Left ventricle myocardium inferior (tissue), 1 donor: ENCODE measurements at regions of chr19 and their contacts with region 1.

Region 1: GRCh38 chr19:10269333-10270179 is 1.4 kb upstream of the ICAM1 start:
- DNase-seq: peak; percentile 90
- H3K4me3 ChIP-seq: peak overlapping the region; percentile 71
- H3K27ac ChIP-seq: peak overlapping the region; percentile 93
- H3K4me1 ChIP-seq: peaks cover 50% of the 10 kb centered on the region
- H3K27me3 ChIP-seq: peaks cover 21% of the 10 kb centered on the region
- CTCF ChIP-seq: peak; percentile 98

Region 2: GRCh38 chr19:10173257-10173926 is 96.2 kb before region 1 on chr19:
- intact Hi-C with region 1: no loop called
- DNase-seq: no peak
- H3K4me3 ChIP-seq: no peak overlapping the region
- H3K27ac ChIP-seq: no peak overlapping the region
- H3K4me1 ChIP-seq: no peaks in the 10 kb centered on the region
- H3K27me3 ChIP-seq: no peaks in the 10 kb centered on the region
- CTCF ChIP-seq: no peak

Region 3: DNA sequence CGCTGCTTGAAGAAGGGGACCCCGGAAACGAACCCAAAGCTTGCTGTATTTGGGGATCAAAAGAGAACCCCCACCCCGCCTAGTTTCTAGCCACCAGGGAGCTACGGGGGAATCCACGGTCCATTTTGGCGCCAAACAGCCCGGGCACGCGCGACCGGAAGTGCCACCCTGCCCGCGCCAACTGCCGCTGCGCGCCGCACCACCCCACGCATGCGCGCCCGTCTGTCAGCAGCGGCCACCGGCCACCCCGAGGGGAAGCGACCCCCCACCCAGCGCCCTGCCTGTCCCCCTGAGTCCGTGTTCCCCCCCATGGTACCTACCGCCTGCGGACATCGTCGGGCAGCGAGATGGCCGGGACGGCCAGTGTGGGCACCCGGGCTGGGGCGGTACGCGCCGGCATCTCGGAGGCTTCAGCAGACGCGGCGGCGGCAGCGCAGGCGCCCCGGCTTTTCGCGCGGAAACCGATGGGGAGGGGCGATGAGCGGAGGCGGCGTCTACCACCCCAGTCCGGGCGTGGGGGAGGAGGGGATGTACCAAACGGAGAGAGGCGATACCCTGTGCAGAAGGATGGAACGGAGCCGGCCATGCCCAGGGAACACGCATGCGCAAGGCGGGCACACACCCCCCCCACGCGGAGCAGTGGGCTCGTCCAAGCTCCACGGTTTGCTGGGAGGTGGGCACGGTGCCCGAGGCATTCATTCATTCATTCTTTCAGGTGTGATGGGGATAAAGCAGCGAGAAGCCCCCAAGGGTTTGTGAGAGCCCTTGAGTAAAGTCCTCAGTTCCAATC is 74.9 kb before region 1 on chr19 and contains the start of gene DNMT1:
- intact Hi-C with region 1: no loop called
- DNase-seq: peak; percentile 95
- H3K4me3 ChIP-seq: peak within 1 kb of the TSS; percentile 94
- H3K27ac ChIP-seq: peak within 1 kb of the TSS; percentile 91
- H3K4me1 ChIP-seq: peaks cover 39% of the 10 kb centered on the region
- H3K27me3 ChIP-seq: no peaks in the 10 kb centered on the region
- CTCF ChIP-seq: no peak
- total RNA-seq, gene DNMT1: 23.9 TPM

Region 4: DNA sequence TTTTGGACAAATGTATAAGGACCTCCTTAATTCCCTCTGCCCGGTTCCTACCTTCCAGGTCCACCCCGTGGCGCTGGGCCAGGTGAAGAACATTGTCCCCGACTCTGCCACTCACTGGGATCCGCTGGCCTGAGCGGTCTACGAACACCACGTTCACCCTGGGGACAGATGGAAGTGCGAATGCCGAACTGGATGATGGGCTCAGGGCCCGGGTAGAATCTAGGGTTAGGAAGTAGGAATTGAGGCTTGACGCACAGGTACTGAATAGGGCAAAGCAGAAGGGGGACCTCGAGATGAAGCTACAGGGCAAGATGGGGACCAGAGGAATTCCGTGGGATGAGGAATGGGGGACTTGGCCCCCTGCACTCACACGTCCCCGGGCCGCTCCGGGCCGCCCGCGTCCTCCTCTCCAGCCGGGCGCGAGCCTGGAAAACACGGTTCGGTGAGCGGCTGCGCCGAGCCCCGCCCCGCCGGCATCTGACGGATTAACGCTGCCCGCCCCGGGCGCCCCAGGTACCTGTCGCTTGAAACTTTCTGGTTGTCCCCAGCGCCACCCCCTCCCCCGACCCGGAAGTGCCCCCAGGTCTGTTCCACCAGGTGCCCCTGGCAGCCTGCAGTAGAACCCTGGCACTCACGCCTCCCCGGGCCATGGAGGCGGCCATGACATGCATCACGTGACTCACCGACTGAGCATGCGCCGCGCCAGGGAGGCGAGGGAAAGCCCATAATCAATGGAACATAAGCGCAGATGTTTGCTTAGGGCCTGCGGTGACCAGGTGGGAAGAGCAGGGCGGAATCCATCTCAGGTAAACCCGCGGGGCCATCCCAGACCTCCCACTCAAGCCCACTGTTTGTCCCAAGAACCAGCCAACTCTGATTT is 46.0 kb after region 1 on chr19 and contains the start of gene FDX2:
- intact Hi-C with region 1: no loop called
- DNase-seq: peak; percentile 90
- H3K4me3 ChIP-seq: peak within 1 kb of the TSS; percentile 99
- H3K27ac ChIP-seq: peak within 1 kb of the TSS; percentile 72
- H3K4me1 ChIP-seq: peaks cover 19% of the 10 kb centered on the region
- H3K27me3 ChIP-seq: no peaks in the 10 kb centered on the region
- CTCF ChIP-seq: no peak
- total RNA-seq, gene FDX2: 17.4 TPM

Region 5: DNA sequence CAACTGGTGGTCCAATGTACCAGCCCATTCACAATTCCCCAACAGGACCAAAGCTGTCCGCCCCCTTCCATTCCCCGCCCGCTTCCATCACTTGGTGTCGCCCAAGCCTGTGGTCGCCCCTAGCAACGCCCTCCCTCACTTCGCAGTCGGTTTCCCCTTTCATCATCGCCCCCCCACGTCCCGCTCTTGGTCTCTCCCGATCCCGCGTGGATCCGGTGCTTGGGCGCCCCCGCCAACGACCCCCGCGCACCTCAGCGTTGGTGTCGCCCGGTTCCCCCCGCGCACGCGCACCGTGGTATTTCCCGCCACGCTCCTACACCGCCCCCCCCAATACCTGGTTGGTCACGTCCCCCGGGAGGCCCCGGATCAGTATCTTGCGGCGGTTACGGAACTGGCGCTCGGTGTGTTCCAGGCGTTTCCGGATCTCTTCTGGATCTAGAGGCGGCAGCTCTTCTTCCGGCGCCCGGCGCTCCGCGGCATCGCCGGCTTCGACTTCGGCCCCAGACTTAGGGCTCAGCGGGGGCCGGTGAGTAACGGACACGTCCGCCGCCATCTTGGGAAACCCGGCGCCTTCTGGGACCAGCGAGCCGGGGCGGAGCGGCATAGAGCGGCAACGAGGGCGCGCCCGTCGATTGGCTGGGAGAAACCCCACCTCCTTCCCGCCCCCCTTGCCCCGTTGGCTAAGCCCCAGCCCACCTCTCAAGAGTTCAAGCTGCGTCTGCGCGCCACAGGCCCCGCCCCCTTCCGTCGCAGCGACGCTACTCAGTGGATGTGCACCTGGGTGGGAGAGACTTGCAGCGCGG is 63.6 kb after region 1 on chr19 and contains the start of gene RAVER1:
- intact Hi-C with region 1: loop called (anchors 10 kb)
- DNase-seq: peak; percentile 99
- H3K4me3 ChIP-seq: peak within 1 kb of the TSS; percentile 82
- H3K27ac ChIP-seq: peak within 1 kb of the TSS; percentile 90
- H3K4me1 ChIP-seq: peaks cover 36% of the 10 kb centered on the region
- H3K27me3 ChIP-seq: no peaks in the 10 kb centered on the region
- CTCF ChIP-seq: no peak
- total RNA-seq, gene RAVER1: 11.1 TPM